ENCODE measurements at regions of chrX and their contacts with region 1.

Region 1: DNA sequence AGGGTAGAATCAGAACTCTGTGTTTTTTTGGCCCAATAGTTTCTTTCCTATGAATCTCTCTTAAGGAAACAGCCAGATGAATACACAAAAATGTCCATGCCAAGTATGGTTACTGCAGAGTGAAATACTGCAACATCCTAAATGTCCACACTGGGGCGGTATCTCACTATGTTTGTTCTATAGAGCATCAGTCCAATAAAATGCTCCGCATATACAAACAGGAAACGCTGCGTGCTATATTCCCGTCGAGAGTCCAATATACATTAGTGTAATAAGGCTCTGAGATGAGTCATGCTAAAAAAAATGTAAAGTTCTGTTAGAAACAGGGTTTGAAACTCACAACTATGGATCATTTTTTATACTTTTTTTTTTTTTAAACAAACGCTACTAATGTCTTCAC is 72.9 kb upstream of the ENOX2 start:
- DNase-seq: peak; percentile 63
- H3K4me3 Mint-ChIP-seq: no peak overlapping the region
- H3K27ac Mint-ChIP-seq: no peak overlapping the region
- H3K4me1 Mint-ChIP-seq: no peaks in the 10 kb centered on the region
- H3K27me3 Mint-ChIP-seq: peaks cover 35% of the 10 kb centered on the region
- CTCF ChIP-seq: peak; percentile 65

Region 2: GRCh38 chrX:130716781-130717413 is 259.1 kb before region 1 on chrX:
- CTCF ChIA-PET with region 1: no interaction called
- POLR2A ChIA-PET with region 1: no interaction called
- intact Hi-C with region 1: no loop called
- DNase-seq: no peak
- H3K4me3 Mint-ChIP-seq: no peak overlapping the region
- H3K27ac Mint-ChIP-seq: no peak overlapping the region
- H3K4me1 Mint-ChIP-seq: no peaks in the 10 kb centered on the region
- H3K27me3 Mint-ChIP-seq: peaks cover 65% of the 10 kb centered on the region
- CTCF ChIP-seq: no peak

Region 3: GRCh38 chrX:131366407-131366806 is 390.5 kb after region 1 on chrX:
- CTCF ChIA-PET with region 1: interaction called, 4 read pairs
- POLR2A ChIA-PET with region 1: no interaction called
- intact Hi-C with region 1: loop called (anchors 2 kb)
- DNase-seq: peak; percentile 9
- H3K4me3 Mint-ChIP-seq: no peak overlapping the region
- H3K27ac Mint-ChIP-seq: no peak overlapping the region
- H3K4me1 Mint-ChIP-seq: no peaks in the 10 kb centered on the region
- H3K27me3 Mint-ChIP-seq: peaks cover 71% of the 10 kb centered on the region
- CTCF ChIP-seq: peak; percentile 5